CD4-positive, alpha-beta memory T cell (primary cell): ENCODE measurements at regions of chr11 and their contacts with region 1.

Region 1: GRCh38 chr11:35907648-35908431 is 36.0 kb upstream of the LDLRAD3 start:
- DNase-seq: no peak
- H3K4me3 ChIP-seq: no peak overlapping the region
- H3K4me3 Mint-ChIP-seq: no peak overlapping the region
- H3K27ac ChIP-seq: no peak overlapping the region
- H3K27ac Mint-ChIP-seq: no peak overlapping the region
- H3K4me1 ChIP-seq: no peaks in the 10 kb centered on the region
- H3K4me1 Mint-ChIP-seq: no peaks in the 10 kb centered on the region
- H3K27me3 ChIP-seq: no peaks in the 10 kb centered on the region
- H3K27me3 Mint-ChIP-seq: peaks cover 2 to 4% of the 10 kb centered on the region in 2 donors

Region 2: GRCh38 chr11:35845860-35846259 is 62.0 kb before region 1 on chr11:
- CTCF ChIA-PET with region 1: no interaction called
- POLR2A ChIA-PET with region 1: no interaction called
- intact Hi-C with region 1: loop called (anchors 10 kb)
- DNase-seq: no peak
- H3K4me3 ChIP-seq: no peak overlapping the region
- H3K4me3 Mint-ChIP-seq: no peak overlapping the region
- H3K27ac ChIP-seq: no peak overlapping the region
- H3K27ac Mint-ChIP-seq: no peak overlapping the region
- H3K4me1 ChIP-seq: no peaks in the 10 kb centered on the region
- H3K4me1 Mint-ChIP-seq: no peaks in the 10 kb centered on the region
- H3K27me3 ChIP-seq: no peaks in the 10 kb centered on the region
- H3K27me3 Mint-ChIP-seq: peaks cover 2 to 10% of the 10 kb centered on the region in 2 donors